ENCODE measurements at regions of chr6 and their contacts with region 1.

Region 1: DNA sequence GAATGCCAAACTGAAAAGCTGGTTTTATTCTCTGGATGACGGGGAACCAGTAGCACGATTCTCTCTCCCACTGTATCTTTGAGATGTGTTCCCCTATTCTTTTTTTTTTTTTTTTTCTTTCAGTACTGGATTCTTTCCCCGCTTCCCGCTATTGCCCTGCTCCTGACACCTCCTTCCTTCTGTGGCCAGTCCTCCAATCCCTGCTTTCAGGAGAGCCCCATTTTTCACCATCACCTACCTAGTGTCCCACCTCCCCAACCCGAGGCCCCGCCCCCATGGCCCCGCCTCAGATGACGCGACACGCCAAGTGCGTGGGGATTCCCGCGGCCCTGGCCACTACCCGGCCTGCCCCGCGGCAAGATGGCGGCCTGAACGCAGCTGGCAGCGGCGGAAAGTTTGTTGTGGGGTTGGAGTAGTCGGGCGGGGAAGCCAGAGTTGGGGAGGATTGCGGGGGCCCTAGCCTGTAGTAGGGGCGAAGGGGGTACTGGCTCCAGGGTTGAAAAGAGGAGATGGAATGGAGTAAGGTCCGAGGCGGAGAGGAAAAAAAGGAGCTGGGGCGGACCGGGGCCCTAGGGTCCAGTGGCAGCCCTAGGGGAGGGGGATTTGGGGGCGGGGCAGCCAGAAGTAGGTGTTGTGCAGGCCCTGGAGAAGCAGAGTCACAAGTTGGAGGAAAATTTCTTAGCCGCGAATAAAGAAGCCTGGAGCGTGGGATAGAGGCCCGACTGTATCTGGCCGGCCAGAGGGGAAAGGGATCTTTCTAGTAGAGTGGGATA is at the start of gene TJAP1:
- DNase-seq: peak; percentile 78
- ATAC-seq: peak; percentile 100
- H3K4me3 ChIP-seq: peak within 1 kb of the TSS; percentile 66
- H3K27ac ChIP-seq: peak within 1 kb of the TSS; percentile 83
- H3K4me1 ChIP-seq: peaks cover 7% of the 10 kb centered on the region
- H3K27me3 ChIP-seq: no peaks in the 10 kb centered on the region
- CTCF ChIP-seq: no peak
- POLR2A ChIP-seq: peak; percentile 94
- RAD21 ChIP-seq: no peak
- total RNA-seq, gene TJAP1: 12.2 and 12.5 TPM in 2 replicates

Region 2: DNA sequence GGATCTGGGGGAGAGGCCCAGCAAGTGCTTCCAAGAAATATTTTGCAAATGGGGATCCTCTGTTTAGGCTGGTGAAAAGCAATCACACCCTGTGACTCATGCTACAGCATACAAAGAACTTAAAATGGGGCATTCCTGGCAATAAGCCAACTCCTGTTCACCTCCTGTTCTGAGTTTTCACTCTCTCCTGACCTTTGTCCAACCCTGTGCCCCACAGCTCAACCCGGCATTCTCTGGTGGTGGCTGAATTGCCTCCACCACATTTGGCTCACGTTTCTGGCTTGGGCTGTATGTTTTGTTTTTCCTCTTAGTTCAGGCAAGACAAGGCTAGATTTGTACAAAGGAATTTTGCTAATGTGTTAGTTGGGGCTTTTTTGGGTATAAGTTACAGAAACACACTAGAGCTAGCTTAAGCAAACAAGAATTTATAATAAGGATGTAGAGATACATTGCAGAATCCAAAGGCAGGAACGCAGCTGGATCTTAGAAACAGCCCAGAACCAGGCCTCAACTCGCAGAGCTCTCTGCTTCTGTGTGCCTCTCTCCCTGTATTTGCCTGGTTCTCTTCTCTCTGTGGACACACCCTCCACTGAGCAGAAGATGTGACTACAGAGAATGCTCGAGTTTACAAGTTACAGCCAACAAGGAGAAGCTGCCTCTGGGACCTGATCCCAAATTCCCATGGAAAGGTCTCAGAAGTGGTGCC is 40.7 kb before region 1 on chr6:
- CTCF ChIA-PET with region 1: no interaction called
- POLR2A ChIA-PET with region 1: interaction called, 3 read pairs
- dilution Hi-C with region 1: no loop called
- in situ Hi-C with region 1: no loop called
- intact Hi-C with region 1: loop called (anchors 1 kb)
- DNase-seq: peak; percentile 65
- ATAC-seq: peak; percentile 74
- H3K4me3 ChIP-seq: no peak overlapping the region
- H3K27ac ChIP-seq: peak overlapping the region; percentile 68; the same call in 1 of the 2 replicates
- H3K4me1 ChIP-seq: peaks cover 16% of the 10 kb centered on the region
- H3K27me3 ChIP-seq: no peaks in the 10 kb centered on the region
- CTCF ChIP-seq: no peak
- POLR2A ChIP-seq: no peak
- RAD21 ChIP-seq: no peak